CD4-positive, alpha-beta memory T cell (primary cell): ENCODE measurements at regions of chr19 and their contacts with region 1.

Region 1: DNA sequence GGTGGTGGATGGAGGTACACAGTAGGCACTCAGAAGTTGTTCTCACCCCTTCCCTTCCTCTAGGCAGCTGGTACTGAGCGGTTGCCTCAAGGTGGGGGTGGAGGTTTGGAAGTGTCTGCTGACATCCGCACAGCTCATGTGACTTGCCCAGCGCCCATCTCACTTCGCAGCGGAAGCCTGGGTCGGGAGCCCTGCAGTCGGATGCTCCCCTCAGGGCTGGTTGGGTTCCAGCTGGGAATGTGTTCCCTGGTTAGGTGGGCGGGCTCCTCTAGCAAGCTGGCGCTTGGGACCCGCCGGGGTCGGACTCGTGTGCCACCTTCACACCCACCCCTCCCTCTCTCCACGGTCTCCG is 10.2 kb downstream of the PPP1R37 start:
- DNase-seq: peak; percentile 41 to 52 (median 51)
- H3K4me3 ChIP-seq: peak overlapping the region in 1 of 2 donors; percentile 11
- H3K4me3 Mint-ChIP-seq: peak overlapping the region; percentile 35 to 78 (median 72)
- H3K27ac ChIP-seq: no peak overlapping the region
- H3K27ac Mint-ChIP-seq: peak overlapping the region in 6 of 7 donors; percentile 52 to 92 (median 80)
- H3K4me1 ChIP-seq: peaks cover 34% of the 10 kb centered on the region
- H3K4me1 Mint-ChIP-seq: peaks cover 36 to 81% (median 50%) of the 10 kb centered on the region in 4 donors
- H3K27me3 ChIP-seq: no peaks in the 10 kb centered on the region
- H3K27me3 Mint-ChIP-seq: no peaks in the 10 kb centered on the region

Region 2: DNA sequence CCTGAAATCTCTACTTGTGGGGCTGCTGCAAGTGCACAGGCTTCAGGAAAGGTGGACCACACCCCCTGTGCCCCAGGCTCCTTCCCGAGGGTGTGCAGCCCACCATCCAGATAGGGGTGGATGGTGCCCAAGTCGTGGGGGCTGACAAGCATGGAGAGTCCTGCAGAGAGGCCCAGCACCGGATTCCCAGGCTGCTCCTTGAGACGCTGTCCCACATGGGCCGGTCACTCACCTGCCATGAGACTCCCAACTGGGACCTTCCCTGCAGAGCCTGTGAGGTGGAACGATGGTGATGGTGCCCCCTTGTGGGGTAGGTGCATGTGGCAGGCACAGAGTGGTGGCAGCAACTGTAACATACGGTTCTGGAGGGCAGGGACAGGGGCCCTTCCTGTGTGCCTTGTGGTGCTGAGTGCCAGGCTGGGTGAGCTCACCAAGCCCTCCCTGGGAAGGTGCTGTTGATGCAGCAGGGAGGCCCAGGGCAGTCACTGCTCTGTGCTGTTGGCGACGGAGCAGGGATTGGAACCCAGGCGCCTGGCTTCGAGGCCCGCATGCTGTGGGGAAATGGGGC is 22.9 kb after region 1 on chr19:
- CTCF ChIA-PET with region 1: interaction called, 19 read pairs
- POLR2A ChIA-PET with region 1: interaction called, 5 read pairs
- intact Hi-C with region 1: no loop called
- DNase-seq: peak; percentile 50 to 58 (median 55)
- H3K4me3 ChIP-seq: no peak overlapping the region
- H3K4me3 Mint-ChIP-seq: no peak overlapping the region
- H3K27ac ChIP-seq: no peak overlapping the region
- H3K27ac Mint-ChIP-seq: no peak overlapping the region
- H3K4me1 ChIP-seq: peaks cover 17% of the 10 kb centered on the region
- H3K4me1 Mint-ChIP-seq: peaks cover 9 to 28% (median 21%) of the 10 kb centered on the region in 4 donors
- H3K27me3 ChIP-seq: no peaks in the 10 kb centered on the region
- H3K27me3 Mint-ChIP-seq: no peaks in the 10 kb centered on the region

Region 3: DNA sequence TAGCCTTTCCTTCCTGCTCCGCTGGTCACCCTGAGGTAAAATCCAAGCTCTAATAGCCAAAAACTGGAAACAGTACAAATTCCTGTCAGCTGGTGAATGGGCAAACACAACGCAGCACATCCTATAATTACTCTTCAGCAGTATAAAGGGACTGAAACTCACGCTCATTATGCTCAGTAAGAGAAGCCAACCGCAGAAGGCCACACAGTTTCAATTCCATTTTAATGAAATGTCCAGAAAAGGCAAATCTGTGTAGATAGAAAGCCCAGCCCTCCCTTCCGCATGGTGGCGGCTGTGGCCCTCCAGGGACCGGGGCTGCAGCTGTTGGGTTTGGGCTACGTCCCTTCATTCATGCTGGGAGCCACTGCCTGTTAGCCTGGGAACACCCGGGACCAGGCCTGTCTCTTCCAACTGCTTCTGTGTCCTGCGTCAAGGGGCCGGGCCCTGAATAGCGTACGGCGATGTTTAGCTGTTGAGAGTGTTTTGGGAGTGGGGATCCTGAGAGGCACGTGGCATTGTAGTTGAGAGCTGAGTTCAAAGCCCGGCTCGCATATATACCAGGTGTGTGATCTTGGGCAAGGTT is 34.1 kb after region 1 on chr19:
- CTCF ChIA-PET with region 1: no interaction called
- POLR2A ChIA-PET with region 1: no interaction called
- intact Hi-C with region 1: no loop called
- DNase-seq: peak in 1 of 5 donors; percentile 4
- H3K4me3 ChIP-seq: no peak overlapping the region
- H3K4me3 Mint-ChIP-seq: no peak overlapping the region
- H3K27ac ChIP-seq: no peak overlapping the region
- H3K27ac Mint-ChIP-seq: peak overlapping the region in 2 of 7 donors; percentile 66 to 78
- H3K4me1 ChIP-seq: no peaks in the 10 kb centered on the region
- H3K4me1 Mint-ChIP-seq: peaks cover 0 to 5% (median 4%) of the 10 kb centered on the region in 4 donors
- H3K27me3 ChIP-seq: no peaks in the 10 kb centered on the region
- H3K27me3 Mint-ChIP-seq: no peaks in the 10 kb centered on the region